Right lobe of liver (tissue), 6 donors: ENCODE measurements at regions of chr14 and their contacts with region 1.

Region 1: DNA sequence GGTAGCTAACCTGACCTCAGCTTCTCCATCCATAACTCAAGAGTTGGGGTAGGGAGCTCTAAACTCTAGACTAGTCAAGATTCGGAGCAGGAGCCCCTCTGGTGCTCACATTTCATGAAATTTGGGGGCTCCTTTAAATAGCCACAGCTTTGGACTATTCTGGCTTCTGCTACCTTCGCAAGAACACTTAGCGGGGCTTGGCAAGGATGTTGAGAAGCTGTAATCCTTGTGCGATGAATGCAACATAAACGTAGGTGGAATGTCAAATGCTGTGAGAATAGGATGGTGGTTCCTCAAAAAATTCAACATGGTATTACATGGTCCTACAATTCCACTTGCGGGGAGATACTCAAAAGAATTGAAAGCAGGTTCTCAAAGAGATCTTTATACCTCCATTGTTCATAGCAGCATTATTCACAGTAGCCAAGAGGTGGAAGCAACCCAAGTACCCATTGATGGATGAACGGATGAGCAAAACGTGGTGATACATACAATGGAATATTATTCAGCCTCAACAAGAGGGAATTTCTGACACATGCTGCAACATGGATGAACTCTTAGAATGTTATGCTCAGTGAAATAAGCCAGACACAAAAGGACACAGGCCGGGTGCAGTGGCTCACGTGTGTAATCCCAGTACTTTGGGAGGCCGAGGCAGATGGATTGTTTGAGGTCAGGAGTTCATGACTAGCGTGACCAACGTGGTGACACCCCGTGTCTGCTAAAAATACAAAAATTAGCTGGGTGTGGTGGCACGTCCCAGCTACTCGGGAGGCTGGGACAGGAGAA is 73.8 kb downstream of the ACTN1 start:
- DNase-seq: no peak
- ATAC-seq: no peak
- H3K4me3 ChIP-seq: no peak overlapping the region
- H3K27ac ChIP-seq: no peak overlapping the region
- H3K4me1 ChIP-seq: peaks cover 0 to 7% (median 0%) of the 10 kb centered on the region in 4 donors
- H3K27me3 ChIP-seq: no peaks in the 10 kb centered on the region
- CTCF ChIP-seq: no peak
- POLR2A ChIP-seq: no peak

Region 2: DNA sequence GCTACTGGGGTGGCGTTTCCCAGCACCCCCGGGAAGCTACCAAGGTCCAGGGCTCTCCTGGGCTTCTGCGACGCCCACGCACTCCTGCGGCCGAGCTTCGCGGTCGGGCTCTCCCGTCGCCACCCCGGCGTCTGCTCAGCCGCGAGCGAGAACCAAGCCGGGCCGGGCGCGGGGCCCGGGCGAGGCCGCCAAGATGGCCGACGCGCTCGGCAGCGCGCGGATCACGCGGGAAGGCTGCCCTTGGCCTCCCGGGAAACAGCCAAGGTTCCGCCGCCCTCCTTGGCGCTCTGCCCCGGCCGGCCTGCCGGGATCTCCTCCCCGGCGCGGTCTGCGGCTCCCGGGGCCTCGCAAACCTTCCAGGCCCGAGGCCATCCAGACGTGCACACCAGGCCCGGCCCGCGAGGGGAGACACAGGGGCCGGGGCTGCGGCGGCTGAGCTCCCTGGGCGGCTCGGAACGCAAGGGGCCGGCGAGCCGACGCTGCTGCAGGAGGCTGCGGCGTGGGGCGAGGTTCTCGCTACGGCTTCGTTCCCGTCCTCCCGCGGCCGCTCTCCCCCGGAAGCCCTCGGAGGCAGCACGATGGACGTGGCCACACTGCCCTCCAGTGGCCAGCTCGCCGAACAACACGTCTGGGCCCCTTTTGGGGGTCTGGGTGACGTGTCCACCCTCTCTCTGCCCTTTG is 88.9 kb before region 1 on chr14:
- intact Hi-C with region 1: no loop called
- DNase-seq: peak; percentile 92 to 94 (median 93)
- ATAC-seq: peak; percentile 70 to 87 (median 76)
- H3K4me3 ChIP-seq: peak overlapping the region; percentile 55 to 66 (median 65)
- H3K27ac ChIP-seq: peak overlapping the region; percentile 98 to 100 (median 100)
- H3K4me1 ChIP-seq: peaks cover 0 to 66% (median 29%) of the 10 kb centered on the region in 4 donors
- H3K27me3 ChIP-seq: no peaks in the 10 kb centered on the region
- CTCF ChIP-seq: peak; percentile 95 to 99 (median 96)
- POLR2A ChIP-seq: peak; percentile 85

Region 3: DNA sequence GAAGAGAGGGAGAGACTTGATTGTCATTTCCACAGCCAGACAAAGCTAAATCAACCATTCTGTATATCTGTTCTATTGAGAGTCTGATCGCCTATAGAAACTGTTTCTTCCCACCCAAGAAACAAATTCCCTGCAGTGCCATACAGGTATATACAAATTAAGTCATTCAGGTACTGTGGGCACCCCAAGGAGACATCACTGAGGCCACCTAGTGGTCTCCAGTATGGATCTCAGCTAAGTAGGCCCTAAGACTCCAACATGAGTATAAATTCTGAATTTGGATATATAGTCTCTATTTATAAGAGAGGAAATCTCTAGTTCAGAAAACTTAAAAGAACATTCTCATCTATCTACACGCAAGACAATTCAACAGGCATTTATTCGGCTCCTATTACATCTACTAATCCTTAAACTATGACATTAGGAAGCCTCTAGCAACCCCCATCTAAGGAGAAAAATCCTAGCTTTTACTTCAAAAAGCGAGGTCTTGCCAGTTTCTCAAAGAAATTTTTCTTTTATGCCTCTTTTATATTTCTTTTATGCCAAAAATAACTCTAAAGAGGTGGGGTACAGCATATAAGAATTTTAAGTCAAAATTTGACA is 185.0 kb after region 1 on chr14:
- intact Hi-C with region 1: loop called in 1 of 2 experiments (anchors 10 kb)
- DNase-seq: no peak
- ATAC-seq: peak; percentile 68 to 80 (median 78)
- H3K4me3 ChIP-seq: no peak overlapping the region
- H3K27ac ChIP-seq: no peak overlapping the region
- H3K4me1 ChIP-seq: peaks cover 0 to 15% (median 0%) of the 10 kb centered on the region in 4 donors
- H3K27me3 ChIP-seq: no peaks in the 10 kb centered on the region
- CTCF ChIP-seq: peak; percentile 62 to 74 (median 68)
- POLR2A ChIP-seq: no peak